T-cell (primary cell): ENCODE measurements at regions of chr10 and their contacts with region 1.

Region 1: DNA sequence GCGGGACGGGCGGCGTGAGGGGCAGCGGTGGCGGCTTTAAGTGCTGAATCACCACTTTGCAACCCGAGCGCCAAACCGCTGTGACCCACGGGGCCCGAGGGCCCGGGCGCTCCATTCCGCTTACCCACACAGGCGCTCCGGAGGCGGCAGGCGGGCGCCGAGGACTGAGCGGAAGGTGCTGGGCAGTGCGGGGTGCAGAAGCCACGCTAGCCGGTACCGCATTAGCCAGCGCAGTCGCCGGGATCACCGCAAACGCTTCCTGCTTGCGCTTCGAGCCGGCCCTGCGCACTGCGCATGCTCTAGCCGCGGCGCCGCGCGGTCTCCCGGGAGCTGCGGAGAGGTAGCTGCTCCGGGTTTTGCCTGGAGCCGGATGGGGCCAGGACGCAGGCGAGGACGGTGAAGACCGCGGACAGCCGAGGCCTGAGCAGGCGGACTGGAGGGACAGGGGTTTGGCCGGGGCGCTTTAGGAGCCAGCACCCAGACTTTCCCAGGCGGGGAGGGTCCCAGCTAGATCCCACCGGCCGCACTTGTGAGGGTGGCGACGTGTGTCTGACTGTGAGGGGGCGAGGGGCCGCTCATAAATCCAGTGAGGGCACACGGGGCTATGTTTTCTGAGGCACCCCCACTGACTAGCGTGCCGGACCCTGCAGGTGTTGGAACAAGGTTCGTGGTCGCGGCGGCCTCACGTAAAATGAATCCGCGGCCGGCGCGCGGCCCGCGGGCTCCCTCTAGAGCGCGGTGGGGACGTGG is at the start of gene IDE:
- DNase-seq: peak; percentile 52 to 87 (median 70)
- ATAC-seq: peak; percentile 79 to 82 (median 80)
- H3K4me3 ChIP-seq: peak within 1 kb of the TSS; percentile 86 to 90
- H3K4me3 Mint-ChIP-seq: peak within 1 kb of the TSS; percentile 73 to 86 (median 80)
- H3K27ac ChIP-seq: peak within 1 kb of the TSS; percentile 81
- H3K27ac Mint-ChIP-seq: peak within 1 kb of the TSS; percentile 85 to 90
- H3K4me1 ChIP-seq: peaks cover 6 to 16% of the 10 kb centered on the region in 2 experiments
- H3K4me1 Mint-ChIP-seq: peaks cover 34 to 41% (median 38%) of the 10 kb centered on the region in 3 donors
- H3K27me3 ChIP-seq: no peaks in the 10 kb centered on the region
- H3K27me3 Mint-ChIP-seq: no peaks in the 10 kb centered on the region
- total RNA-seq, gene IDE: 24.7 to 31.8 (median 27.2) TPM

Region 2: GRCh38 chr10:92298487-92298886 is 275.5 kb before region 1 on chr10:
- CTCF ChIA-PET with region 1: interaction called in 1 of 2 experiments, 11 read pairs
- POLR2A ChIA-PET with region 1: no interaction called
- DNase-seq: no peak
- ATAC-seq: no peak
- H3K4me3 ChIP-seq: no peak overlapping the region
- H3K4me3 Mint-ChIP-seq: no peak overlapping the region
- H3K27ac ChIP-seq: no peak overlapping the region
- H3K27ac Mint-ChIP-seq: no peak overlapping the region
- H3K4me1 ChIP-seq: peaks cover 6 to 9% of the 10 kb centered on the region in 2 experiments
- H3K4me1 Mint-ChIP-seq: peaks cover 59 to 65% (median 60%) of the 10 kb centered on the region in 3 donors
- H3K27me3 ChIP-seq: no peaks in the 10 kb centered on the region
- H3K27me3 Mint-ChIP-seq: no peaks in the 10 kb centered on the region

Region 3: DNA sequence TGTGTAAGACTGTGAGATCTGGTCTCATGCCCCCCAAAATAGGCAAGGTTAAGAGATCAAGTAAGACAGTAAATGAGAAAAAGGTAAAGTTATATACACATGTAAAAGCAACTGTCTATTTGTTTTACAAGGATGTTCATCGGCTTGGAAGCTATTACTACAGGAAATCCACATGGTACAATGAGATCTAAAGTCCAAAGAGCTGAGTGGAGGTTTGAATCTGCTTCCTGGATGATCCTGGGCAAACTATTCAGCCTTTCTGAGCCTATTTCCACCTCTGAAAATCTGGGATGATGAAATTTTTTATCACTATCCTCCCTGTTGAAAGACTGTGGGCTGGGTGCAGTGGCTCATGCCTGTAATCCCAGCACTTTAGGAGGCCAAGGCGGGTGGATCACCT is 123.1 kb before region 1 on chr10:
- CTCF ChIA-PET with region 1: no interaction called
- POLR2A ChIA-PET with region 1: no interaction called
- DNase-seq: no peak
- ATAC-seq: no peak
- H3K4me3 ChIP-seq: no peak overlapping the region
- H3K4me3 Mint-ChIP-seq: no peak overlapping the region
- H3K27ac ChIP-seq: no peak overlapping the region
- H3K27ac Mint-ChIP-seq: no peak overlapping the region
- H3K4me1 ChIP-seq: no peaks in the 10 kb centered on the region
- H3K4me1 Mint-ChIP-seq: no peaks in the 10 kb centered on the region
- H3K27me3 ChIP-seq: no peaks in the 10 kb centered on the region
- H3K27me3 Mint-ChIP-seq: no peaks in the 10 kb centered on the region

Region 4: GRCh38 chr10:92517034-92517655 is 56.8 kb before region 1 on chr10:
- CTCF ChIA-PET with region 1: interaction called, 18 to 61 read pairs
- POLR2A ChIA-PET with region 1: no interaction called
- DNase-seq: peak; percentile 6 to 91 (median 59)
- ATAC-seq: peak; percentile 89 to 98 (median 92)
- H3K4me3 ChIP-seq: no peak overlapping the region
- H3K4me3 Mint-ChIP-seq: no peak overlapping the region
- H3K27ac ChIP-seq: no peak overlapping the region
- H3K27ac Mint-ChIP-seq: peak overlapping the region; percentile 28 to 63
- H3K4me1 ChIP-seq: peaks cover 0 to 2% of the 10 kb centered on the region in 2 experiments
- H3K4me1 Mint-ChIP-seq: peaks cover 7 to 8% (median 8%) of the 10 kb centered on the region in 3 donors
- H3K27me3 ChIP-seq: no peaks in the 10 kb centered on the region
- H3K27me3 Mint-ChIP-seq: no peaks in the 10 kb centered on the region

Region 5: DNA sequence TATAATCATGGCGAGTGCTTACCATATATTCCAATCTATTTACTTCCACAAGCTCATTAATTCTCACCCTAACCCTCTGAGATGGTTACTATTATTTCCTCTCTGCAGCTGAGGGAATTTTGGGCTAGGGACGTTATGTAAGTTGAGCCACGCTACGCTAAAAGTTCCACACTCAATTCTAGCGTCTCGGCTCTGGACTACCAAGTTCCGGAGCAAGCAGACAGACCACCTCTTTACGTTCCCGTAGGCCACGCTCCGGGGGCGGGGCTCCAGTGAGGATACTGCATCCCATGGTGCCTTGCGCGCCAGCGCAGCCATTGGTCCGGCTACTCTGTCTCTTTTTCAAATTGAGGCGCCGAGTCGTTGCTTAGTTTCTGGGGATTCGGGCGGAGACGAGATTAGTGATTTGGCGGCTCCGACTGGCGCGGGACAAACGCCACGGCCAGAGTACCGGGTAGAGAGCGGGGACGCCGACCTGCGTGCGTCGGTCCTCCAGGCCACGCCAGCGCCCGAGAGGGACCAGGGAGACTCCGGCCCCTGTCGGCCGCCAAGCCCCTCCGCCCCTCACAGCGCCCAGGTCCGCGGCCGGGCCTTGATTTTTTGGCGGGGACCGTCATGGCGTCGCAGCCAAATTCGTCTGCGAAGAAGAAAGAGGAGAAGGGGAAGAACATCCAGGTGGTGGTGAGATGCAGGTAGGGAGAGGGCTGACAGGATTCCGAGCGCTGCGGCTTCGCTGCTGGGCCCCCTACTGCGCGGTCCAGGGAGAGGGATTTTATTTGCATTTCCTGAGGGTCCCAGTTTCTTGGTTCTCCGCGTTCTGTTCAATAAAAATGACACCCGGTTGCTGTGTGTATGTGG is 19.0 kb after region 1 on chr10 and contains the start of gene KIF11:
- CTCF ChIA-PET with region 1: interaction called in 1 of 2 experiments, 16 read pairs
- POLR2A ChIA-PET with region 1: interaction called, 4 to 8 read pairs
- DNase-seq: peak; percentile 92 to 98 (median 96)
- ATAC-seq: peak; percentile 83 to 90 (median 86)
- H3K4me3 ChIP-seq: peak within 1 kb of the TSS; percentile 73 to 86
- H3K4me3 Mint-ChIP-seq: peak within 1 kb of the TSS; percentile 96 to 99 (median 97)
- H3K27ac ChIP-seq: peak within 1 kb of the TSS; percentile 98
- H3K27ac Mint-ChIP-seq: peak within 1 kb of the TSS; percentile 99 to 100
- H3K4me1 ChIP-seq: peaks cover 20 to 33% of the 10 kb centered on the region in 2 experiments
- H3K4me1 Mint-ChIP-seq: peaks cover 28 to 52% (median 33%) of the 10 kb centered on the region in 3 donors
- H3K27me3 ChIP-seq: no peaks in the 10 kb centered on the region
- H3K27me3 Mint-ChIP-seq: no peaks in the 10 kb centered on the region
- total RNA-seq, gene KIF11: 1.2 to 2.0 (median 1.6) TPM